ENCODE measurements at regions of chr10 and their contacts with region 1.

Region 1: DNA sequence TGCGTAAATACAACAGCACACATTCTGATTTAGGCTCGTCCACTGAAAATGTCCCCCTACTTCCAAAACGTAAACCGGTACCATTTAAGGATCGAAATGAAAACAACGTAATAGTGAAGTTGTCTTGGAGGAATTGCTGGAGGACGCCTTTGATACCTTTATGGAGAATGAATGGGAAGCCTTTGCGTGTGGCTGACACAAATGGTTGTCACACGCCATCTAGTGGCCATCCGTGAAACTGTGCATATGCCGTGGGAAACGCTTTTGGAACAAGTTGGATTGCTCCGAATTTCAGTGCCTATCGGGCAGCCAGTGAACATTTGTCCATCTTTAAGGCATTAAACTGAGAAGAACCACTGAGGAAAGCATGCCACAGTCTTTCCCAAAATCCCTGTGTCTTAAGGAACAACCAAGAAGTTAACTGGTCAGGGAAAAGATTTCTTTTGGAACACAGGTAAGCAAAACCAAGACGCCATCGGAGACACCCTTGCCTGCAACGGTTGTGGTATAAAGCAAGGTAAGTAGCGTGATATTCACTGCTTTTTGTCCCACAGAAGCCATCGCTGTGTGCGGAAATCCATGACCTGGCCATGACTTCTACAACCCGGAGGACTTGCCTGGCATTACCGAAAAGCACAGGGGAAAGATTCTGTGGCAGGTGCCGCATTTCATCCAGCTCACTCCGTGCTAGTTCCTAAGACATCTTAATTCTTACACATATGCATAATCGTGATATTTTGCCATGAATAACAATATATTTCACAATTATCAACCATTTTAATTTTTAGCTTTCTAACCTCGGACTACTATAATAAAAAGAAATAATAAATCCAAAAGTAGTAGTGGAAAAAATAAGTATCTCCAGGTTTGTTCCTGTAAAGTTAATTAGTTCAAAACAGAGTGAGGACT is 100.6 kb downstream of the FAM204A start:
- DNase-seq: peak; percentile 83
- ATAC-seq: peak; percentile 74
- H3K4me3 ChIP-seq: 0 out of 2 replicates have a peak overlapping the region, but pooled peaks have one; percentile 7
- H3K27ac ChIP-seq: no peak overlapping the region
- H3K4me1 ChIP-seq: peaks cover 3% of the 10 kb centered on the region; the same call in 1 of the 2 replicates
- H3K27me3 ChIP-seq: peaks cover 71% of the 10 kb centered on the region
- CTCF ChIP-seq: peak; percentile 88

Region 2: DNA sequence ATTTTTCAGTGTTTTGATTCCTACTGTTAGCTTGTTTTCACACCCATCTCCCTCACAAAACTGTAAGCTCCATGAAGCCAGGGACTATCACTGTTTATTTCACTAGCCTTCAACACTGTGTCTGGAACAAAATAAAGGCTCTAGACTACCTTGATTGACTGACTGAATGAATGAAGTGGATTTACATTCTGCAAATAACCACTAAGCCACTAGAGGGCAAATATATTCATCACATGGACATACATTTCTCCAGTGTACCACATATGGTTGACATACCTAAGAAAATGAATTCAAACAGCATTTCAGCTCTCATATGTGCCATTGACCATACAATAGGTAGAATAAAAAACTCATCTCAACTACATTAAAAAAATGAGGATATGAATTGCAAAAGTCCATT is 380.7 kb before region 1 on chr10:
- CTCF ChIA-PET with region 1: no interaction called
- POLR2A ChIA-PET with region 1: no interaction called
- intact Hi-C with region 1: loop called (anchors 1 kb)
- DNase-seq: peak; percentile 46
- ATAC-seq: no peak
- H3K4me3 ChIP-seq: no peak overlapping the region
- H3K27ac ChIP-seq: no peak overlapping the region
- H3K4me1 ChIP-seq: 0 out of 2 replicates have a peak, but pooled peaks cover 8% of the 10 kb centered on the region
- H3K27me3 ChIP-seq: peaks cover 18% of the 10 kb centered on the region; the same call in 1 of the 2 replicates
- CTCF ChIP-seq: peak; percentile 55